ENCODE measurements at regions of chr1 and their contacts with region 1.

Region 1: DNA sequence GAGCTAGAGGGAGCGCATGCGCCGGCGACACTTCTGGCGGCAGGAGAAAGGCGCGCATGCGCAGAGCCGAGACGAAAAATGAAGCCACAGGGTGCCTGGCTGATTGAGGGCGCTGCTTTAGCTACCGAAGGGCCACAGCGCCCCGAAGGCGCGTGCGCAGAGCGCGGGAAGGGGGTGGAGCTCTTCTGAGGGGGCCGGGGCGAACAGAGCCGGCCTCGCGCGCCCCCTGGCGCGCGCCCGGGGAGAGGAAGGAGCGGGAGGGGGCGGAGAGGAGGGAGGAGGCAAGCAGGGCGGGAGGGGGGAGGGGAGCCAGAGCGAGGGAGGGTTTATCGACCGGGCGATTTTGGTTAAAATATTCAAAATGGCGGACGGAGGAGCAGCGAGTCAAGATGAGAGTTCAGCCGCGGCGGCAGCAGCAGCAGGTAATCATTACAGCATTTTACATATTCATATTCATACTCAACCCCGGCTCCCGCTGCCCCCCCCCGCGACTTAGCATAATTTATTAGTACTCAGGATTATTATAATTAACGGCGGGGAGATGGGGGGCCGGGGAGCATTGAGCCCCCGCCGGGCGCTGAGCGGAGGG is at the start of gene POU2F1:
- DNase-seq: peak; percentile 100
- H3K4me3 Mint-ChIP-seq: peak within 1 kb of the TSS; percentile 100
- H3K27ac Mint-ChIP-seq: peak within 1 kb of the TSS; percentile 100
- H3K4me1 Mint-ChIP-seq: peaks cover 34% of the 10 kb centered on the region
- H3K27me3 Mint-ChIP-seq: no peaks in the 10 kb centered on the region
- CTCF ChIP-seq: peak; percentile 60
- total RNA-seq, gene POU2F1: 11.6 and 16.7 TPM in 2 replicates

Region 2: GRCh38 chr1:166902271-166902670 is 318.4 kb before region 1 on chr1:
- CTCF ChIA-PET with region 1: interaction called, 11 read pairs
- POLR2A ChIA-PET with region 1: interaction called, 3 read pairs
- intact Hi-C with region 1: no loop called
- DNase-seq: peak; percentile 63
- H3K4me3 Mint-ChIP-seq: no peak overlapping the region
- H3K27ac Mint-ChIP-seq: peak overlapping the region; percentile 14
- H3K4me1 Mint-ChIP-seq: peaks cover 5% of the 10 kb centered on the region
- H3K27me3 Mint-ChIP-seq: no peaks in the 10 kb centered on the region
- CTCF ChIP-seq: no peak

Region 3: DNA sequence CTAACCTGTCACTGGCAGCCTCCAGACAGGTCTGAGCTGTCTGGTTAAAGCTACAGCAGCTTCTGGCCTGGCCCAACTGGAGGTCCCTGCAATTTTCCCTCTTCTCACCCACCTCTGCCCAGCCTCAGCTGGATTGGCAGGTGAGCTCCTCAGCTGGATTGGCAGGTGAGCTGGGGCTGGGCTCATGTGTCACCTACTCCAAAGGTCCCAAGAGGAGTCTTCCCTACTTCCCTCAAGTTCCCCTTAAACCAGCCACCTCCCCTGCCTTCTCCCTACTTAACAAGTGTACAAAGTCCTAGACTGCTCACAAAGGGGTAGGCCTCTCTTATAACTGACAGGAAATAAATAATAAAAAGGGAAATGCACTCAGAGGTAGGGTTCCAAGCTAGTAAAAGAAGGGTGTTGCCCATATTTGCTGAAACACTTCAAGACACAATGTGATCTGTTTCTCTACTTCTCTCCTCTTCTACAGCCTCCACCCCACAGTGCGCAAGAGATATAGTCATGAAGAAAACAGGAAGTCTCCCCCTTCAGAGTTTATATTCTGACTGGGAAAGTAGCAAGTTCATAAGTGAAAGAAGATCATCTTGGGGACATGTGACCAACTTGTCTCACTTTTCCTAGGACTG is 130.2 kb before region 1 on chr1 and contains the start of gene GPA33:
- CTCF ChIA-PET with region 1: interaction called, 10 read pairs
- POLR2A ChIA-PET with region 1: interaction called, 15 read pairs
- intact Hi-C with region 1: no loop called
- DNase-seq: no peak
- H3K4me3 Mint-ChIP-seq: no peak within 1 kb of the TSS
- H3K27ac Mint-ChIP-seq: no peak within 1 kb of the TSS
- H3K4me1 Mint-ChIP-seq: peaks cover 9% of the 10 kb centered on the region
- H3K27me3 Mint-ChIP-seq: no peaks in the 10 kb centered on the region
- CTCF ChIP-seq: no peak
- total RNA-seq, gene GPA33: not detected in 2 replicates

Region 4: DNA sequence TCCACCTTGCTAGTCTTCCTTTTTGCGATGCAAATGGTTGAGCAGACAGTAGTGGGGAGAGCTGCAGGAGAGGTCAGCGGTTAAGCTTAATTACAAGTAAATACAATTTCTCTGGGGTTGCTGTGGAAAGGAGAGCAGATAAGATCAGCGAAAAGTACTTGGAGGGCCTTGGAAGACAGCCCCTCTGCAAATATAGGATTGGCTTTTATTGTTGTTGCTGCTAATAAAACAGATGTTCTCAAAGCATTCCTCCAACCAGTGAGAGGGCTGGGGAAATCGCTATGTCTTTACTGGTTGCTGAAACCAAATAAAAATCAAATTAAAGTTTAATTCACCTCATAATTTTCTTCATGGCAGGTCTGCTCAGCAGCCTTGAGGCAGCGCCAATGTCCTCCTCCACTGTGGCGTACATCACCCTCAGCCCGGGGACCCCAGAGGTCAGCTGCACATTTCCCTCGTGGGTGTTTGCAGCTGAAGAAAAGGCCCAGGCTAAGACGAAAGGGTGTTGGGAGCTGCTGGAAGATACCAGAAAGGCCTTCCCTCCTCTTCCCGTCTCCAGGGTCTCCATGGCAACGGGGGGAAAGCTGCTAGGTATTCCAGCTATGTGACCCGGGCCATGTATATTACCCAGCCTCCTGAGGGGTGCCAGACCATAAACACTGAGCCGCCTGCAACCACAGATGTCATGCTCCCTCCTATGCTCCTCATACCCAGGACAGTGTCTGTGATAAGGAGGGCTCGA is 54.5 kb before region 1 on chr1:
- CTCF ChIA-PET with region 1: interaction called, 11 read pairs
- POLR2A ChIA-PET with region 1: interaction called, 30 read pairs
- intact Hi-C with region 1: no loop called
- DNase-seq: no peak
- H3K4me3 Mint-ChIP-seq: no peak overlapping the region
- H3K27ac Mint-ChIP-seq: no peak overlapping the region
- H3K4me1 Mint-ChIP-seq: peaks cover 34% of the 10 kb centered on the region
- H3K27me3 Mint-ChIP-seq: no peaks in the 10 kb centered on the region
- CTCF ChIP-seq: no peak

Region 5: DNA sequence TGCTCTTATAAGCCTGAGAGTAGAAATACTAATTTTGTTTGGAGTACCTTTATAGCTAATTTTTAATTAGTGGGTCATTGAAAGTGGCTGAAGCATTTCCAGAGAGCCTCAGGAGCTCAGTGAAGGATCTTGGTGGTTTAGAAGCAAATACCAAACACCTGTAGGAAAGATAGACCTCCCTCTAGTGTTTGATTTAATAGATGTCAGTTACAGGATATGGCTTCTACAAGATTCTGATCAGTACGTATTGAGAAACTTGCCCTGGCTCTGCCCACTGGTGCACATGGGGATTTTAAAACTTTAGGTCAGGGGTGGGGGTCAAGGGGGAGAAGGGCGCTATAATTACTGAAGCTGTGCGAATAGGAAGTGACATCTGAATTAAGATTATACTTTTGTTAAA is 122.2 kb after region 1 on chr1:
- CTCF ChIA-PET with region 1: interaction called, 7 read pairs
- POLR2A ChIA-PET with region 1: interaction called, 5 read pairs
- intact Hi-C with region 1: loop called (anchors 2 kb)
- DNase-seq: peak; percentile 53
- H3K4me3 Mint-ChIP-seq: no peak overlapping the region
- H3K27ac Mint-ChIP-seq: no peak overlapping the region
- H3K4me1 Mint-ChIP-seq: peaks cover 18% of the 10 kb centered on the region
- H3K27me3 Mint-ChIP-seq: no peaks in the 10 kb centered on the region
- CTCF ChIP-seq: peak; percentile 45

Region 6: DNA sequence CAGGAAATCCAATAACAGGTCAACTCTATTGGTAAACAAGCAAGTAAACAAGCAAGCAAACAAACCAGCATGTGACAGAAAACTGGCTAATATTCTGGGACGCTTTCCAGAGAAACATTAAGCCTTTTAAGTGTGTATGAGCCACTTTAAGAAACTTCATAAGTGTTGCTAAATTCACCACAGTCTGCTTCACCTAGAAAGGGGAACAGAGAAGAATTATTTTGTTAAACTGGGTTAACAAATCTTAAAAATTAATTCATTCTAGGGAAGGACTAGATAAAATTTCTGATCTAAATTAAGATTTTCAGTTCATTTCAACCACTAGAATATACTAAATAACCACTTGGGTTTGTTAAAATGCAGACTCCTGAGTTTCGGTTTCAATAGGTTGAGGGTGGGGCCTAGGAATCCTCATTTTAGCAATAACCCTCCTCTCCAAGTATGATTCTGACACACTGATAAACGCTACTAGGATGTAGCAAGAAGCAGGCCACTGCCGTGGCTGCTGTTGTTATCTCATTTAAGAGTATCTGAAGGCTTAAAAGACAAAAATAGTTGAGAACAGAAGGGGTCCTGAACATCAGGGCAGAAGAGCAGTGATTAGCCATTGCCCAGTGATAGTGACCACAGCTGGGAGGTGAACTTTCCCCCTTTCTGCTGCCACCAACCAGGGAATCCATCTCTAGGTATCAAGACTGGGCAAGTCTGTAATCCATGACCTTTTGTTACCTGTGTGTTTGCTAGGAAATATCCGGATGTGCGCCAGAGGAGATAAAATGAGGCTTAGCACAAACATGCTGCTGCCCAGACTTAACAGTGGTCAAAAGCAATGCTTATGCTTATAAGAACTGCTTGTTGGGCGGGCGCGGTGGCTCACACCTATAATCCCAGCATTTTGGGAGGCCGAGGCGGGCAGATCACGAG is 321.7 kb after region 1 on chr1:
- CTCF ChIA-PET with region 1: interaction called, 13 read pairs
- POLR2A ChIA-PET with region 1: interaction called, 8 read pairs
- intact Hi-C with region 1: loop called (anchors 5 kb)
- DNase-seq: peak; percentile 77
- H3K4me3 Mint-ChIP-seq: no peak overlapping the region
- H3K27ac Mint-ChIP-seq: peak overlapping the region; percentile 29
- H3K4me1 Mint-ChIP-seq: peaks cover 42% of the 10 kb centered on the region
- H3K27me3 Mint-ChIP-seq: no peaks in the 10 kb centered on the region
- CTCF ChIP-seq: no peak